CD4-positive, alpha-beta memory T cell (primary cell): ENCODE measurements at regions of chr20 and their contacts with region 1.

Region 1: DNA sequence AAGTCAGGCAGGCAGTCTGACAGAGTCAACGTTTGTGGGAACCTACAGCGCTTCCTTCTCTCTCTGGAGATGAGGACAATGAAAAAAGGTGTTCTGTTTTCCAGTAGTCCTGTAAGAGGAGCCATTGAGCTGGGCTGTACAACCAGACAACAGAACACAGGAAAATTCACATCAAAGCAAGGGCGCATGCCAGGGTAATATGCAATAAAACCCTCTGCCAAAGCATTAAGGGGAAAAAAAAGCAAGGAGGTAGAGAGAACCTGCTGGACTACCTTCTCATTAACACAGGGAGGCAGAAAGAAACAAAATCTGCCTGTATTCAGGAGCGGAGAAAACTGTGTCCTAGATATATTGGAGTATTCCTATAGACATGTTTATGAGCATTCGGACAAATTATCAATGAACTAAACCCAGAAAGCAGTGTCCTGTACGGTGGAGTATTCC is 1.3 kb downstream of the RNF24 start:
- DNase-seq: peak; percentile 41 to 57 (median 45)
- H3K4me3 ChIP-seq: peak overlapping the region in 1 of 2 donors; percentile 1
- H3K4me3 Mint-ChIP-seq: peak overlapping the region; percentile 83 to 96 (median 92)
- H3K27ac ChIP-seq: no peak overlapping the region
- H3K27ac Mint-ChIP-seq: peak overlapping the region; percentile 71 to 98 (median 92)
- H3K4me1 ChIP-seq: peaks cover 32% of the 10 kb centered on the region
- H3K4me1 Mint-ChIP-seq: peaks cover 14 to 40% (median 31%) of the 10 kb centered on the region in 4 donors
- H3K27me3 ChIP-seq: no peaks in the 10 kb centered on the region
- H3K27me3 Mint-ChIP-seq: no peaks in the 10 kb centered on the region

Region 2: DNA sequence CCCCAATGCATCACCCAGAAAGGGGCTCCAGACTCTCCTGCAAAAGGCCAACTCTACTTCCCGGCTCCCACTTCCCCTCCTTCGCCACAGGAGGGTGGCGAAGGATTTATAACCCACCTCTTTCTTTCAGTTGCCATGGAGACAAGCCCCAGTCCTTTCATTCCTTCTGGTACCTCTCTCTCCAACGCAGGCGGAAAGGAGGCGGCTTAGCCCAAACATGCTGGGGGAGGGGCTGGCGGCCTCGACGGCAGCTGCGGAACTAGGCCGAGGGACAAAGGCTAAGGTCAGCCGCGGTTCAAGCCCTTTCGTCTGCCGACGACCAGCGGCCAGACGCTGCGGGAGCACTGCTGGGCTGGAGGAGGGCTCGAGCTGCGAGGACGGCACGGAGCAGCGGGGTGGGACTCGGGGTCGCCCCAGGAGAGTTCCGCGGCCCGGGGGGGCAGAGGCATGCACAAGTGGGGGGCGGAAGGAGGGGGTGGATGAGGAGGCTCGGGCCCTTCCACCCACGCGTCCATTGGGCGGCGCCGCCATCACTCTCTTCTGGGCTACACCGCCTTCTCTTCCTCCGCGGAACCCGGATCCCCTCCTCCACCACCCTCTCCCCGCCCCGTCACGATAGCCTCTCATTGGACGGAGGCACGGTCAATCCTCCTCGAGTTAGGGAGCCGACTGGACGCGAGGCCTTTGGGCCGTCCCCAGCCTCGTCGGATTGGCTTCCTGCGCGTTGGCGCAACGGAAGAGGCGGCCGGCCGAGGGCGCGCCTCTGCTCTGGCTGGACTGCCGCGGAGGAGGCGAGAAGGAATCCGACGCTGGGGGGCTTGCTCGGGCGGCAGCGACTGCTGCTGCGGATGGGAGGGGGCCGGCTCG is 125.2 kb before region 1 on chr20 and contains the start of gene PANK2:
- CTCF ChIA-PET with region 1: interaction called, 7 read pairs
- POLR2A ChIA-PET with region 1: no interaction called
- intact Hi-C with region 1: loop called (anchors 1 kb)
- DNase-seq: peak; percentile 95 to 98 (median 96)
- H3K4me3 ChIP-seq: peak within 1 kb of the TSS; percentile 96 to 98
- H3K4me3 Mint-ChIP-seq: peak within 1 kb of the TSS; percentile 96 to 100 (median 98)
- H3K27ac ChIP-seq: peak within 1 kb of the TSS; percentile 79
- H3K27ac Mint-ChIP-seq: peak within 1 kb of the TSS; percentile 96 to 98 (median 97)
- H3K4me1 ChIP-seq: peaks cover 46% of the 10 kb centered on the region
- H3K4me1 Mint-ChIP-seq: peaks cover 34 to 68% (median 47%) of the 10 kb centered on the region in 4 donors
- H3K27me3 ChIP-seq: no peaks in the 10 kb centered on the region
- H3K27me3 Mint-ChIP-seq: no peaks in the 10 kb centered on the region
- total RNA-seq, gene PANK2: 71.4 to 80.5 TPM

Region 3: DNA sequence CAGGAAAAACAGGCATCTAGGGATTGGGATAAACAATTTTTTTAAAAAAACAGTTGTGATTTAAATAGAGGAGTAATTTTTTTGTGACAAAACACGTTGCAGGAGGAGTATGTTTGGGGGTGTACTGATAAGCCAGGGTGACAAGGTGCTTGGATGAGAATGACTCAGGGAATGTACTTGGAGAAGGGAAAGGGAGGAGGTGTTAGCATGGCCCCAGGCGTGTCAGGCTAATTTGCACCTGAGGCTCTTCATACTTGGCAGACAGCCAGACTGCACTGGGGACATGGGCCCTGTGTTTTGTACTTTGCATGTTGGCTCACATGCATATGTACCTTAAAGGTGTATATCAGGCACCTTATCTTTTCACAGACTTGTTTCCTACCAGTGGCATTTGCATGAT is 102.1 kb before region 1 on chr20:
- CTCF ChIA-PET with region 1: no interaction called
- POLR2A ChIA-PET with region 1: no interaction called
- intact Hi-C with region 1: loop called (anchors 5 kb)
- DNase-seq: no peak
- H3K4me3 ChIP-seq: no peak overlapping the region
- H3K4me3 Mint-ChIP-seq: no peak overlapping the region
- H3K27ac ChIP-seq: no peak overlapping the region
- H3K27ac Mint-ChIP-seq: peak overlapping the region in 3 of 7 donors; percentile 9 to 88 (median 47)
- H3K4me1 ChIP-seq: peaks cover 35% of the 10 kb centered on the region
- H3K4me1 Mint-ChIP-seq: peaks cover 27 to 58% (median 50%) of the 10 kb centered on the region in 4 donors
- H3K27me3 ChIP-seq: no peaks in the 10 kb centered on the region
- H3K27me3 Mint-ChIP-seq: no peaks in the 10 kb centered on the region

Region 4: GRCh38 chr20:3995067-3995748 is 18.8 kb before region 1 on chr20:
- CTCF ChIA-PET with region 1: interaction called, 10 read pairs
- POLR2A ChIA-PET with region 1: interaction called, 9 read pairs
- intact Hi-C with region 1: no loop called
- DNase-seq: peak in 1 of 5 donors; percentile 29
- H3K4me3 ChIP-seq: no peak overlapping the region
- H3K4me3 Mint-ChIP-seq: peak overlapping the region in 5 of 8 donors; percentile 39 to 63 (median 52)
- H3K27ac ChIP-seq: no peak overlapping the region
- H3K27ac Mint-ChIP-seq: peak overlapping the region in 6 of 7 donors; percentile 33 to 81 (median 68)
- H3K4me1 ChIP-seq: peaks cover 43% of the 10 kb centered on the region
- H3K4me1 Mint-ChIP-seq: peaks cover 29 to 69% (median 45%) of the 10 kb centered on the region in 4 donors
- H3K27me3 ChIP-seq: no peaks in the 10 kb centered on the region
- H3K27me3 Mint-ChIP-seq: no peaks in the 10 kb centered on the region

Region 5: DNA sequence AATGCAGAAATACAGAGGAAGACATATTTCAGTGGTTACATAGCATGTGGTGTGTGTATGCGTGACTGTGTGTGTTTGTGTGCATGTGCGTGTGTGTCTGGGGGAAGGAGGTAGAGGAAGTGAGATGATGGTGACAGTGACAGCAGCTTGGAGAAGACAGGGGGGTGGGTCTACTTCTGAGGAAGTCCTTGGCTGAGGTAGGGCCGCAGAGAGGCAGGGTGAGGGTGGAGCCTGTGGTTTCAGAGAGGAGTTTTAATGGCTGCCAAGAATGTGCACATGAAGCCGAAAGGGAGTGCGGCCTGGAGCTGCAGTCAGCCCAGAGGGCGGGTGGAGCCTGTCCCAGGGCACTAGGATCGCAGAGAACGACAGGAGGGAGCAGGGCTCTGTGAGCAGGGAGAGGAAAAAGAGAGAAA is 24.0 kb after region 1 on chr20:
- CTCF ChIA-PET with region 1: interaction called, 3 read pairs
- POLR2A ChIA-PET with region 1: no interaction called
- intact Hi-C with region 1: loop called (anchors 2 kb)
- DNase-seq: peak; percentile 82 to 96 (median 91)
- H3K4me3 ChIP-seq: peak overlapping the region in 1 of 2 donors; percentile 37
- H3K4me3 Mint-ChIP-seq: peak overlapping the region; percentile 80 to 89 (median 86)
- H3K27ac ChIP-seq: peak overlapping the region; percentile 39
- H3K27ac Mint-ChIP-seq: peak overlapping the region; percentile 74 to 99 (median 98)
- H3K4me1 ChIP-seq: peaks cover 22% of the 10 kb centered on the region
- H3K4me1 Mint-ChIP-seq: peaks cover 11 to 23% (median 18%) of the 10 kb centered on the region in 4 donors
- H3K27me3 ChIP-seq: no peaks in the 10 kb centered on the region
- H3K27me3 Mint-ChIP-seq: no peaks in the 10 kb centered on the region

Region 6: GRCh38 chr20:4091490-4092479 is 77.7 kb after region 1 on chr20:
- CTCF ChIA-PET with region 1: interaction called, 97 read pairs
- POLR2A ChIA-PET with region 1: interaction called, 3 read pairs
- intact Hi-C with region 1: loop called (anchors 2 kb)
- DNase-seq: peak in 4 of 5 donors; percentile 18 to 28 (median 26)
- H3K4me3 ChIP-seq: no peak overlapping the region
- H3K4me3 Mint-ChIP-seq: no peak overlapping the region
- H3K27ac ChIP-seq: no peak overlapping the region
- H3K27ac Mint-ChIP-seq: no peak overlapping the region
- H3K4me1 ChIP-seq: no peaks in the 10 kb centered on the region
- H3K4me1 Mint-ChIP-seq: peaks cover 0 to 4% (median 3%) of the 10 kb centered on the region in 4 donors
- H3K27me3 ChIP-seq: no peaks in the 10 kb centered on the region
- H3K27me3 Mint-ChIP-seq: peaks cover 5 to 9% of the 10 kb centered on the region in 2 donors

Region 7: GRCh38 chr20:4225745-4226144 is 211.7 kb after region 1 on chr20:
- CTCF ChIA-PET with region 1: no interaction called
- POLR2A ChIA-PET with region 1: no interaction called
- intact Hi-C with region 1: no loop called
- DNase-seq: no peak
- H3K4me3 ChIP-seq: no peak overlapping the region
- H3K4me3 Mint-ChIP-seq: no peak overlapping the region
- H3K27ac ChIP-seq: no peak overlapping the region
- H3K27ac Mint-ChIP-seq: no peak overlapping the region
- H3K4me1 ChIP-seq: peaks cover 5% of the 10 kb centered on the region
- H3K4me1 Mint-ChIP-seq: peaks cover 3 to 15% (median 6%) of the 10 kb centered on the region in 4 donors
- H3K27me3 ChIP-seq: no peaks in the 10 kb centered on the region
- H3K27me3 Mint-ChIP-seq: peaks cover 17 to 34% of the 10 kb centered on the region in 2 donors

Region 8: GRCh38 chr20:4592316-4593148 is 578.5 kb after region 1 on chr20:
- CTCF ChIA-PET with region 1: no interaction called
- POLR2A ChIA-PET with region 1: no interaction called
- intact Hi-C with region 1: loop called (anchors 5 kb)
- DNase-seq: peak; percentile 35 to 51 (median 38)
- H3K4me3 ChIP-seq: peak overlapping the region in 1 of 2 donors; percentile 40
- H3K4me3 Mint-ChIP-seq: peak overlapping the region; percentile 61 to 86 (median 76)
- H3K27ac ChIP-seq: no peak overlapping the region
- H3K27ac Mint-ChIP-seq: peak overlapping the region in 2 of 7 donors; percentile 48 to 83
- H3K4me1 ChIP-seq: peaks cover 12% of the 10 kb centered on the region
- H3K4me1 Mint-ChIP-seq: peaks cover 5 to 13% (median 6%) of the 10 kb centered on the region in 4 donors
- H3K27me3 ChIP-seq: no peaks in the 10 kb centered on the region
- H3K27me3 Mint-ChIP-seq: peaks cover 11 to 13% of the 10 kb centered on the region in 2 donors